OCI-LY7 (cell line): ENCODE measurements at regions of chr12 and their contacts with region 1.

Region 1: DNA sequence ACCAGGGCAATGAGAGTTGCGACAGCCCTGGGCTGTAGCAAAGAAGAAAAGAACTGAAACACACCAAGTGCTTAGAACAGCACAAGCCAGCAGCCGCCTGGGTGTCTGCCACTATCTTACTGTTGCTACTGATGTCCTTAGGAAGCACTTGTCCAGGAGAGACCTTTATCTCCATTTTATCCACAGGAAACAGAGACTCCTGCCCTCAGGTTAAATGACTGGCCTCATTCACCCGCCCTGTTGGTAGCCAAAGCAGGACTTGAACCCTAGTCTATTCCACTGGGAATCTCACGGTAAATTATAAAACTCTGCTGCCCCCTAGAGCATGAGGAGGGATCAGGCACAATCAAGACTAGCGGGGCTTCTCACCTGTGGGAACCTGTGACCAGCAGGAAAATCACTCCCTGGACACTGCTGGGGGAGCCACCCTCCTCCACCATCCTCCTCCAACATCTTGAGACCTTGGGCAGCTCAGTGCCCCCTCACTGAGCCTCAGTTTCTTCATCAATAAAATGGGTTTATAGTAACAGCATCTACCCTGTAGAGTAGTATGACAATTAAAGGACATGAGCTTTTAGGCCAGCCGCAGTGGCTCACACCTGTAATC is 20.5 kb upstream of the TESC start:
- DNase-seq: peak; percentile 58
- H3K4me3 ChIP-seq: no peak overlapping the region
- H3K27ac ChIP-seq: no peak overlapping the region
- H3K4me1 ChIP-seq: no peaks in the 10 kb centered on the region
- CTCF ChIP-seq: peak; percentile 95

Region 2: DNA sequence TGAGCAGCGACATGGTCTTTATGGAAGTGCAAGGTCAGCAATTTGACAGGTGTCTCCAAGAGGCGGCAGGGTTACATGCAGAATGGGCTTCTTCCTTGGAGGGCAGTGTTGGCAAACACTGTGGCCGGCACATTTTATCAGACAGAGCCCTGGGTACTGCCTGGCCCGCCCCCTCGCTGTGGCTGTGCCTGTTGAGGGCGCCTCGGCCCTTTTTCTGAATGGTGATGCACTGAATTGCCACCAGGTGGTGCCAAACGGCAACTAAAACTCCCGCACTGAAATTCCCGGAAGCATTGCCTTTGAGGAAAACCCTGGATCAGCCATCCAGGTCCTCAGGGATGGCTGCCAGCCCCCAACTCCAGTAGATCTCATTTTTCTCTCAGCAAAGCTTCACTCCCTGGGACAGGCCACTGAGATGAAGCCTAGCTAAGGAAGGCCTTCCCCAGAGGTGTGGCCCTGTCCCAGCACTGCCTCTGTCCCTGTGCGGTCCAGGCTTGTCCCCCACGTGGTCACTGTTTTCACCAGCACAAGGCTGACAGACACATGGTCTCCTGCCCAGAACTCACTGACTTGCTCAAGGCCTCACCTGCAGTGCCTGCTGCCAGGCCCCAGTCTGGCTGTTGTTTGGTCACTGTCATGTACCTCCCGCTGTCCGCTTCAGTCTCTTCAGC is 94.1 kb before region 1 on chr12:
- CTCF ChIA-PET with region 1: interaction called, 3 read pairs
- POLR2A ChIA-PET with region 1: no interaction called
- intact Hi-C with region 1: loop called (anchors 1 kb)
- DNase-seq: peak; percentile 69
- H3K4me3 ChIP-seq: no peak overlapping the region
- H3K27ac ChIP-seq: no peak overlapping the region
- H3K4me1 ChIP-seq: no peaks in the 10 kb centered on the region
- CTCF ChIP-seq: peak; percentile 98

Region 3: GRCh38 chr12:117033382-117034221 is 86.1 kb before region 1 on chr12:
- CTCF ChIA-PET with region 1: no interaction called
- POLR2A ChIA-PET with region 1: interaction called, 5 read pairs
- intact Hi-C with region 1: loop called (anchors 2 kb)
- DNase-seq: no peak
- H3K4me3 ChIP-seq: no peak overlapping the region
- H3K27ac ChIP-seq: no peak overlapping the region
- H3K4me1 ChIP-seq: no peaks in the 10 kb centered on the region
- CTCF ChIP-seq: no peak